CD4-positive, alpha-beta memory T cell (primary cell): ENCODE measurements at regions of chrX and their contacts with region 1.

Region 1: GRCh38 chrX:54044126-54044876 is at the start of gene PHF8:
- DNase-seq: peak; percentile 91 to 96 (median 96)
- H3K4me3 ChIP-seq: peak within 1 kb of the TSS; percentile 34 to 69
- H3K4me3 Mint-ChIP-seq: peak within 1 kb of the TSS; percentile 91 to 97 (median 94)
- H3K27ac ChIP-seq: peak within 1 kb of the TSS; percentile 90
- H3K27ac Mint-ChIP-seq: peak within 1 kb of the TSS; percentile 96 to 99 (median 97)
- H3K4me1 ChIP-seq: peaks cover 9% of the 10 kb centered on the region
- H3K4me1 Mint-ChIP-seq: peaks cover 10 to 41% (median 15%) of the 10 kb centered on the region in 4 donors
- H3K27me3 ChIP-seq: no peaks in the 10 kb centered on the region
- H3K27me3 Mint-ChIP-seq: no peaks in the 10 kb centered on the region
- total RNA-seq, gene PHF8: 65.1 to 67.2 TPM

Region 2: DNA sequence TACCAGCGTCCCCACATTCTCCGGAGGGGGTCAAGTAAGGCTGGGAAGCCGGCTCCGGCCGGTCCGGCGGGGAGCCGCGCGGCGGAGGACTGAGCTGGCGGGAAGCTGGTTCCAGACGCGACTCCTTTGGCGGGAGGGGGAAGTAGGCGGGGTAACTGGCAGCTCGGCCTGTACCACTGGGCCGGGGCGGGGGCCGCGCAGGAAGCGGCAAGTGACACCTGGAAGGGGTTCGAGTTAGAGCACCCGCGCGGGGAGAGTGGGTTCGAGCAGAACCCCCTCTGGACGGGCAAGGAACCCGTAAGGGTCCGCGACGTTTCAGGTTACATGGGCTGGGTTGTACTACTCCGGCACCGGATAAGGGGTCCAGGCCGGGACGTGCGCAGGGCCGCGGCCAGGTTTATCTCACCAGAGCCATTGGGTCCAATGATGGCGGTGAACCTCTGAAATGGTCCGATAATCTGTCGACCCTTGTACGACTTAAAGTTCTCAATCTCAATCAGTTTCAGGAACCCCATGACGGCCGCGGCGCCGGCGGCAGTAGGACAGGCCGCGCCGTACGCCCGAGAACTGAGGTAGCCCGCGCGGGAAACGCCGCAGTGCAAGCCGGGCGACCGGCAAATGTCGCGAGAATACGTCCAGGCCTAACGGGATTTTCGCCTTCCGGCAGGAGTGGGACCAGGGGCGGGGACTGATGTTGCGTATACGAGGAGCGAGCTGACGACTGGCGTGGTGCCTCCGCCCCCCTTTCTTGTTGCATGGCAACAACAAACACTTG is 622.0 kb before region 1 on chrX and contains the start of gene SMC1A:
- CTCF ChIA-PET with region 1: no interaction called
- POLR2A ChIA-PET with region 1: interaction called, 4 read pairs
- intact Hi-C with region 1: loop called (anchors 5 kb)
- DNase-seq: peak; percentile 98 to 100 (median 99)
- H3K4me3 ChIP-seq: peak within 1 kb of the TSS; percentile 68 to 76
- H3K4me3 Mint-ChIP-seq: peak within 1 kb of the TSS; percentile 86 to 98 (median 94)
- H3K27ac ChIP-seq: peak within 1 kb of the TSS; percentile 90
- H3K27ac Mint-ChIP-seq: peak within 1 kb of the TSS; percentile 92 to 100 (median 99)
- H3K4me1 ChIP-seq: peaks cover 27% of the 10 kb centered on the region
- H3K4me1 Mint-ChIP-seq: peaks cover 21 to 45% (median 32%) of the 10 kb centered on the region in 4 donors
- H3K27me3 ChIP-seq: no peaks in the 10 kb centered on the region
- H3K27me3 Mint-ChIP-seq: no peaks in the 10 kb centered on the region
- total RNA-seq, gene SMC1A: 59.1 to 70.4 TPM

Region 3: DNA sequence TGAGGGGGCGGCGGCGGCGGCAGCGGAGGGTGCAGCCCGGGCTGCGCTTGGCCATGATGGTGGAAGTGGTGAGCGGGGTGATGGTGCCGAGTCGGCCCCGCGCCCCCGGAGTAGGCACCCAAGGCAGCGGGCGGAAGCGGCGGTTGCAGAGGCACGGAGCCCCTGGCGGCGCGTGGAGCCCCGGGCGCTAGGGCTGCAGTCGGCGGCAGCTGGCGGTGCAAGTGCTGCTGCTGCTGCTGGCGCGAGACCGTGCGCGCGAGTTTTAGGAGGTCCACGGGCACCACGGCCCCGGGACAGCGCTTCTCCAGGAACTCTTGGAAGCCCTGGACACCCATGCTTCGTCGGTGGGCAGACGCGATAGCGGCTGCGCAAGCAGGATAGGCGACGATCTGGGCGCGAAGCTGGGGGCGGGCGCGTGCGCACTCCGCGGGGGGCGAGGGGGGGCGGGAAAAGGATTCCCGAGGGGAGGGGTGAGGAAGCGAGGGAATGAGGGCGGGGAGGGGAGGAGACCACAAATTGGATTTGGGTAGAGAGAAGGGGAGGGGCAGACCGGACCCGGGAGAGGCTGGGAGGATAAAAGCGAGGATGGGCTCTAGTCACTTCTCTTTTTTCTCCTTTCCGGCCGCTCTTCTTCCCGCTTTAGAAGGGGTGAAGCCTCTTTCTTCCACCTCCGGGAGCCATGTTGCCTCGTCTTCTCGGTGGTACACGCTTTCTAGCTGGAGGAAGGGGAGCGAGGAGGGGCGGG is 138.7 kb after region 1 on chrX and contains the start of gene FAM120C:
- CTCF ChIA-PET with region 1: no interaction called
- POLR2A ChIA-PET with region 1: interaction called, 59 read pairs
- intact Hi-C with region 1: loop called (anchors 1 kb)
- DNase-seq: peak; percentile 62 to 66 (median 65)
- H3K4me3 ChIP-seq: peak within 1 kb of the TSS; percentile 20 to 63
- H3K4me3 Mint-ChIP-seq: peak within 1 kb of the TSS; percentile 84 to 92 (median 86)
- H3K27ac ChIP-seq: peak within 1 kb of the TSS; percentile 72
- H3K27ac Mint-ChIP-seq: peak within 1 kb of the TSS; percentile 74 to 92 (median 89)
- H3K4me1 ChIP-seq: peaks cover 29% of the 10 kb centered on the region
- H3K4me1 Mint-ChIP-seq: peaks cover 31 to 47% (median 39%) of the 10 kb centered on the region in 4 donors
- H3K27me3 ChIP-seq: no peaks in the 10 kb centered on the region
- H3K27me3 Mint-ChIP-seq: no peaks in the 10 kb centered on the region
- total RNA-seq, gene FAM120C: 17.6 to 21.1 TPM

Region 4: DNA sequence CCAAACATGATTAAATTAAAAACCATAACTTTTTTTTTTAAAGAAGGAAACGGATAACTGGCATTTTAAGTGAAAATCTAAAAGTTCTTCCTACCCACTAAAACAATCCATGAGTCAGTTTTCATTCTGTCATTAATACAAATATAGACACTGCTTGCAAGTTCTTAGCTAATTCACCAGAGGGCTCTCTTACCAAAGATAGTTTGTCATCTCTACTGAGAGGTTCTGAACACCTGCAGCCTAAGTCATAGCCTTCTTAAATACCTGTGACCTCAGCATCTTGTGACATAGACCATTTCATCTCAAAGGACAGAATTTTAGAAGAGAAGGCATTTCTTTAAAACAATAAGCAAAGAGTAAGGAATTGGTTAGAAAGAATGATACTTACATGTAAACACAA is 204.0 kb after region 1 on chrX:
- CTCF ChIA-PET with region 1: no interaction called
- POLR2A ChIA-PET with region 1: no interaction called
- intact Hi-C with region 1: no loop called
- DNase-seq: peak in 4 of 5 donors; percentile 1 to 11 (median 6)
- H3K4me3 ChIP-seq: no peak overlapping the region
- H3K4me3 Mint-ChIP-seq: no peak overlapping the region
- H3K27ac ChIP-seq: no peak overlapping the region
- H3K27ac Mint-ChIP-seq: no peak overlapping the region
- H3K4me1 ChIP-seq: no peaks in the 10 kb centered on the region
- H3K4me1 Mint-ChIP-seq: no peaks in the 10 kb centered on the region
- H3K27me3 ChIP-seq: no peaks in the 10 kb centered on the region
- H3K27me3 Mint-ChIP-seq: peaks cover 0 to 1% of the 10 kb centered on the region in 2 donors

Region 5: GRCh38 chrX:54529552-54530357 is 485.5 kb after region 1 on chrX and contains the start of gene GNL3L:
- CTCF ChIA-PET with region 1: no interaction called
- POLR2A ChIA-PET with region 1: interaction called, 20 read pairs
- intact Hi-C with region 1: loop called (anchors 1 kb)
- DNase-seq: peak; percentile 79 to 84 (median 82)
- H3K4me3 ChIP-seq: peak within 1 kb of the TSS; percentile 88 to 97
- H3K4me3 Mint-ChIP-seq: peak within 1 kb of the TSS; percentile 91 to 99 (median 95)
- H3K27ac ChIP-seq: peak within 1 kb of the TSS; percentile 73
- H3K27ac Mint-ChIP-seq: peak within 1 kb of the TSS; percentile 91 to 98 (median 96)
- H3K4me1 ChIP-seq: peaks cover 34% of the 10 kb centered on the region
- H3K4me1 Mint-ChIP-seq: peaks cover 19 to 45% (median 30%) of the 10 kb centered on the region in 4 donors
- H3K27me3 ChIP-seq: no peaks in the 10 kb centered on the region
- H3K27me3 Mint-ChIP-seq: no peaks in the 10 kb centered on the region
- total RNA-seq, gene GNL3L: 41.7 to 45.1 TPM

Region 6: GRCh38 chrX:55057675-55058249 is 1013.5 kb after region 1 on chrX:
- CTCF ChIA-PET with region 1: no interaction called
- POLR2A ChIA-PET with region 1: interaction called, 5 read pairs
- intact Hi-C with region 1: loop called (anchors 5 kb)
- DNase-seq: peak in 4 of 5 donors; percentile 31 to 41 (median 40)
- H3K4me3 ChIP-seq: no peak overlapping the region
- H3K4me3 Mint-ChIP-seq: peak overlapping the region; percentile 64 to 87 (median 74)
- H3K27ac ChIP-seq: no peak overlapping the region
- H3K27ac Mint-ChIP-seq: peak overlapping the region; percentile 24 to 93 (median 74)
- H3K4me1 ChIP-seq: peaks cover 16% of the 10 kb centered on the region
- H3K4me1 Mint-ChIP-seq: peaks cover 8 to 25% (median 15%) of the 10 kb centered on the region in 4 donors
- H3K27me3 ChIP-seq: no peaks in the 10 kb centered on the region
- H3K27me3 Mint-ChIP-seq: no peaks in the 10 kb centered on the region

Region 7: GRCh38 chrX:55867181-55867651 is 1822.9 kb after region 1 on chrX:
- CTCF ChIA-PET with region 1: no interaction called
- POLR2A ChIA-PET with region 1: no interaction called
- intact Hi-C with region 1: no loop called
- DNase-seq: peak in 2 of 5 donors; percentile 3 to 13
- H3K4me3 ChIP-seq: no peak overlapping the region
- H3K4me3 Mint-ChIP-seq: no peak overlapping the region
- H3K27ac ChIP-seq: no peak overlapping the region
- H3K27ac Mint-ChIP-seq: no peak overlapping the region
- H3K4me1 ChIP-seq: peaks cover 7% of the 10 kb centered on the region
- H3K4me1 Mint-ChIP-seq: peaks cover 8 to 11% (median 9%) of the 10 kb centered on the region in 4 donors
- H3K27me3 ChIP-seq: no peaks in the 10 kb centered on the region
- H3K27me3 Mint-ChIP-seq: peaks cover 0 to 3% of the 10 kb centered on the region in 2 donors